Calu3 (cell line): ENCODE measurements at regions of chr12 and their contacts with region 1.

Region 1: GRCh38 chr12:90999966-91000365 is 4.8 kb downstream of the EPYC start:
- DNase-seq: no peak
- H3K4me3 Mint-ChIP-seq: no peak overlapping the region
- H3K27ac Mint-ChIP-seq: no peak overlapping the region
- H3K4me1 Mint-ChIP-seq: peaks cover 27% of the 10 kb centered on the region
- H3K27me3 Mint-ChIP-seq: no peaks in the 10 kb centered on the region
- CTCF ChIP-seq: no peak

Region 2: DNA sequence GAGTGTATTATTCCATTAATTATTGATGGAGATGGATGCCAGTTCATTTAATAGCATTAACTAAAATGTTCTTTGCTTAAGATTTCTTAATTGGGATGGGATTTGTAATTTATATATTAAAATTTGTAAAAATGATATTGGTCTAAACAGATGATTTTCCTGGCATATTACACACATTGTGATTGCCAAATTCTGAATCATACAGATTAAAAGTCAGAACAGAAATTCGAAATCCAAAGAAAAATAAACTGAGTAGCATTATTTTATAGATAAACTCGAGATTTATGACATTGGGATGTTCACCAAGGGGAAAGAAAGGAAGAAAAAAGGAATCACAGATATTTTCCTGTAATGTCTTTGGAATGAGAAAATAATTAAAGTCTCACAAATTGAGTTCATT is 526.1 kb before region 1 on chr12:
- CTCF ChIA-PET with region 1: no interaction called
- intact Hi-C with region 1: no loop called
- DNase-seq: no peak
- H3K4me3 Mint-ChIP-seq: no peak overlapping the region
- H3K27ac Mint-ChIP-seq: no peak overlapping the region
- H3K4me1 Mint-ChIP-seq: no peaks in the 10 kb centered on the region
- H3K27me3 Mint-ChIP-seq: no peaks in the 10 kb centered on the region
- CTCF ChIP-seq: no peak

Region 3: GRCh38 chr12:91074154-91074709 is 74.3 kb after region 1 on chr12:
- CTCF ChIA-PET with region 1: interaction called, 3 read pairs
- intact Hi-C with region 1: loop called (anchors 2 kb)
- DNase-seq: no peak
- H3K4me3 Mint-ChIP-seq: no peak overlapping the region
- H3K27ac Mint-ChIP-seq: no peak overlapping the region
- H3K4me1 Mint-ChIP-seq: peaks cover 37% of the 10 kb centered on the region
- H3K27me3 Mint-ChIP-seq: no peaks in the 10 kb centered on the region
- CTCF ChIP-seq: no peak